Activated CD4-positive, alpha-beta T cell treated with anti-CD3 and anti-CD28 coated beads for 36 hours (primary cell): ENCODE measurements at regions of chr9 and their contacts with region 1.

Region 1: GRCh38 chr9:129884220-129885017 is 49.2 kb downstream of the USP20 start:
- DNase-seq: peak; percentile 98
- ATAC-seq: peak; percentile 55
- H3K4me3 Mint-ChIP-seq: peak overlapping the region; percentile 97
- H3K27ac Mint-ChIP-seq: peak overlapping the region; percentile 99
- H3K4me1 Mint-ChIP-seq: peaks cover 41% of the 10 kb centered on the region
- H3K27me3 Mint-ChIP-seq: no peaks in the 10 kb centered on the region

Region 2: DNA sequence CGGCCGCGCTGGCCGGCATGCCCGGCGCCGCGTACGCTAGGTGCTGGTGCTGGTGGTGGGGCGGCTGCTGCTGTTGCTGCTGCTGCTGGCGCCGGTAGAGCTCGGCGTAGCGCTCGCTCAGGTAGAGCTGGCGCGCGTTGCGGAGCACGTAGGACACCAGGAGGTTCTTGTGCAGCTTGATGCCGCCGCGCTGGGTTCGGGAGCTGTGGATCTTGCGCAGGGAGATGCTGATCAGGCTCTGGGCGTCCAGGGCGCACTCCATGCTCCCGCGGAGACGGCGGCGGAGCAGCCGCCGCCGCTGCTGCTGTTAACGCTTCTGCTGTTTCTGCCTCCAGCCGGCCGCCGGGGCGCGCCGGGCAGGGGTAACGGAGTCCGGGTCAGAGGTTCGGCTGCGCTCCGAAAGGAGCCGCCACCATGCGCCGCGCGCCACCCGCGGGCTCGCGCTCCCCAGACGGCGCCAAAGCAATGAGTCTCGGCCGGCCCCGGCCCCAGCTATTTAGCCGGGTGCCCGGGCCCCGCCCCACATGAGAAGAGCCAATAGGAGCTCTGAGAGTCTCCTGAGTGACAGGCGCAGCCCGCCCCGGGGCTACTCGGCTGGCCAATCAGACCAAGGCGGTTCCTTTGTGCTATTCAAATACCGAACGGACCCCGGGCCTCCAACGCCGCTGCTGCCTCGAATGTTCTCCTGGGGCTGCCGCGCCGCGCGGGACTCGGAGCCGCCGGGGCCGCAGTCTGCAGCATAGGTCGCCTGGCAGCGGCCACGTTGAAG is 706.4 kb before region 1 on chr9 and contains the start of gene IER5L:
- CTCF ChIA-PET with region 1: no interaction called
- POLR2A ChIA-PET with region 1: no interaction called
- intact Hi-C with region 1: loop called in 1 of 2 experiments (anchors 5 kb)
- DNase-seq: peak; percentile 96
- ATAC-seq: peak; percentile 88
- H3K4me3 Mint-ChIP-seq: peak within 1 kb of the TSS; percentile 83
- H3K27ac Mint-ChIP-seq: peak within 1 kb of the TSS; percentile 65
- H3K4me1 Mint-ChIP-seq: peaks cover 7% of the 10 kb centered on the region
- H3K27me3 Mint-ChIP-seq: peaks cover 3% of the 10 kb centered on the region
- total RNA-seq, gene IER5L: 2.6 to 2.8 TPM

Region 3: GRCh38 chr9:129835021-129835871 is 49.2 kb before region 1 on chr9 and contains the starts of genes C9orf78 and USP20:
- CTCF ChIA-PET with region 1: interaction called, 5 read pairs
- POLR2A ChIA-PET with region 1: interaction called, 16 read pairs
- intact Hi-C with region 1: loop called (anchors 1 to 2 kb)
- DNase-seq: peak; percentile 99
- ATAC-seq: peak; percentile 87
- H3K4me3 Mint-ChIP-seq: peak within 1 kb of the TSS; percentile 96
- H3K27ac Mint-ChIP-seq: peak within 1 kb of the TSS; percentile 96
- H3K4me1 Mint-ChIP-seq: peaks cover 55% of the 10 kb centered on the region
- H3K27me3 Mint-ChIP-seq: no peaks in the 10 kb centered on the region
- total RNA-seq, gene C9orf78: 42.8 to 59.8 TPM
- total RNA-seq, gene USP20: 37.6 to 48.5 TPM

Region 4: GRCh38 chr9:129932303-129933151 is 48.1 kb after region 1 on chr9:
- CTCF ChIA-PET with region 1: interaction called, 6 read pairs
- POLR2A ChIA-PET with region 1: interaction called, 15 read pairs
- intact Hi-C with region 1: loop called in 1 of 2 experiments (anchors 2 kb)
- DNase-seq: no peak
- ATAC-seq: peak; percentile 31
- H3K4me3 Mint-ChIP-seq: peak overlapping the region; percentile 59
- H3K27ac Mint-ChIP-seq: peak overlapping the region; percentile 92
- H3K4me1 Mint-ChIP-seq: peaks cover 69% of the 10 kb centered on the region
- H3K27me3 Mint-ChIP-seq: no peaks in the 10 kb centered on the region

Region 5: DNA sequence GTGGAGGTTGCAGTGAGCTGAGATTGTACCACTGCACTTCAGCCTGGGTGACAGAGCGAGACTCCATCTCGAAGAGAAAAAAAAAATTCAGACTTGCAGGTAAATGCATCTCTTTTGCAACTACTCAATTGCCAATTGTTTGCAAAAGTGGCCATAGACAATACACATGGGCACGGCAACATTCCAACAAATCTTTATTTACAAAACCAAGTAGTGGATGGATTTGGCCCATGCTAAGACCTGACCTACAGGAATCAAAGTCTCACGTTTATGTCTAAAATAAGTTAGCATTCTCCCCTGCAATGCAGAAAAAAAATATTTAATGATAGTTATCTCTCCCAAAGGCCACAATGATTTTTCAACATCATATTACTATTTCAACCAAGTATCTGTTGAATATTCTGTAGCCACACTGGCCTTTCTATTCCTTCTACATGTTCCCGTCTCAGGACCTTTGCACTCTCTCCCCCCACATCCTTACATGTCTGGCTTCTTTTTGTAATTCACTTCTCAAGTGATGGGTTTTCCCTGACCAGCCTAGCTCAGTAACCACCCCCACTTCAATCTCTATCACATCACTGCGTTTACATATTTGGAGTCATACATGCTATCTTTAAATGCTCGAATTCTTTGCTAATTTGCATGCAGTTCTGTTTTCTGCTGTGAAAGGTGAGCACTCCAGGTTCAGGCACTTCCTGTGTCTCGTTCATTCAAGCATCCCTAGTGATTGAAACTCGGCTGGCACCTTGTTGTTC is 104.4 kb after region 1 on chr9:
- CTCF ChIA-PET with region 1: interaction called, 5 read pairs
- POLR2A ChIA-PET with region 1: interaction called, 6 read pairs
- intact Hi-C with region 1: loop called (anchors 1 kb)
- DNase-seq: peak; percentile 54
- ATAC-seq: peak; percentile 55
- H3K4me3 Mint-ChIP-seq: peak overlapping the region; percentile 15
- H3K27ac Mint-ChIP-seq: peak overlapping the region; percentile 84
- H3K4me1 Mint-ChIP-seq: peaks cover 86% of the 10 kb centered on the region
- H3K27me3 Mint-ChIP-seq: no peaks in the 10 kb centered on the region

Region 6: DNA sequence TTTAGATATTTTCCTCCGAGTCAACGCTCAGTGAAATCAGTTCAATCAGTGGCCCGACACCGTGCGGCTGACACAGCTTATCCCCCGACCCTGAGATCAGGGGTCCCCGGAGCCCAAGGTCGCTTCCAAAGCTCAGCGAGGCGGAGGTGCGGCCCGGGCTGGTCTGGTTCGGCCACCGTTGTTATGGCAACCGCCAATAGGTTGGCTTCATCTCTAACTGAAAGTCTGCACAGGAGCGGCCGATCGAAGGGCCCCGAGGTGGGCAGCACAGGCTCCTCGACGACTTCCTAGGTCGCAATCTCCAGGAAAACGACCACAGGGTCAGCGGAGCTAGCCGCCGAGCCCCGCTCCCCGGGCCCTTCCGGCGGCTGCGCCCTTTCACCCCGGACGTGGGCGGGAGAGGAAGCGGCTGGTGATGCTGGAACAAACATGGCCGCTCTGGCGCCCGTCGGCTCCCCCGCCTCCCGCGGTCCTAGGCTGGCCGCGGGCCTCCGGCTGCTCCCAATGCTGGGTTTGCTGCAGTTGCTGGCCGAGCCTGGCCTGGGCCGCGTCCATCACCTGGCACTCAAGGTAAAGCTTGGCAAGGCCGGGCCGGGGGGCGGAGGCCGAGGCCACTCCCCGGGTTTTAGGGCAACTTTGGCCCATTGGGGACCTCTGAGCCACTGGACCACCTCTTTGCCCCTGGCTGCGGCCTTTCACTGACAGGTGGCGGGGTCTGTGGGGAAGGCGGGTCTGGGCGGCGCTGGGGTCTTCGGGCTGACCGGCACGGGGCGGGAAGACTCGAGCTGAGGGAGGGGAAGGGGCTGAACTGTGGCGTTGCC is 169.3 kb after region 1 on chr9 and contains the start of gene GPR107:
- CTCF ChIA-PET with region 1: interaction called, 6 read pairs
- POLR2A ChIA-PET with region 1: interaction called, 4 read pairs
- intact Hi-C with region 1: loop called in 1 of 2 experiments (anchors 1 kb)
- DNase-seq: peak; percentile 91
- ATAC-seq: peak; percentile 90
- H3K4me3 Mint-ChIP-seq: peak within 1 kb of the TSS; percentile 94
- H3K27ac Mint-ChIP-seq: peak within 1 kb of the TSS; percentile 86
- H3K4me1 Mint-ChIP-seq: peaks cover 30% of the 10 kb centered on the region
- H3K27me3 Mint-ChIP-seq: no peaks in the 10 kb centered on the region
- total RNA-seq, gene GPR107: 17.7 to 19.7 TPM

Region 7: DNA sequence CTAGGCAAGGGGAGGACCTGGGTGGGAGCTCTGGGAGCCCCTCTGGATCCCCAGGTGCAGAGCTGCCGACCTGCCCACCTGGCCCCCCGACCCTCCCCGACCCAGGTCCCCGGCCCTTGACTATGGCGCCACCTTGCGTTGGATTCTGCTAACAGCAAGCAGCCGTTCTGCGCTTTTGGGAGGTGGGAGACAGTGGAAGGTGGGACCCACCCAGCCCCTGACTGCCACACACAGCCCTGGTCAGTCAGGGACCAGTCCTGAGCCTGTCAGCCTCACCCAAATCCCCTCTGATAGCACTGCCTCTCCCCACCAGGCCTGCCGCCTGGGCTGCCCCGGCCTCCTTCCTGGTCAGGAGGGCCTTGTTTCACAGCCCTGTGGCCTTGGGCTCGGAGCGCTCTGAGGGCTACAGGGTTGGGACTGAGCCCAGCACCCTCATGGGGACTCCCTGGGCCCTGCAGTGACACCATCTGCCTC is 459.1 kb after region 1 on chr9:
- CTCF ChIA-PET with region 1: no interaction called
- POLR2A ChIA-PET with region 1: no interaction called
- intact Hi-C with region 1: loop called in 1 of 2 experiments (anchors 1 kb)
- DNase-seq: peak; percentile 66
- ATAC-seq: peak; percentile 40
- H3K4me3 Mint-ChIP-seq: no peak overlapping the region
- H3K27ac Mint-ChIP-seq: no peak overlapping the region
- H3K4me1 Mint-ChIP-seq: no peaks in the 10 kb centered on the region
- H3K27me3 Mint-ChIP-seq: no peaks in the 10 kb centered on the region